ENCODE measurements at regions of chr15 and their contacts with region 1.

Region 1: GRCh38 chr15:74540761-74541493 is at the start of gene ARID3B:
- DNase-seq: peak; percentile 99
- H3K4me3 Mint-ChIP-seq: peak within 1 kb of the TSS; percentile 97
- H3K27ac Mint-ChIP-seq: peak within 1 kb of the TSS; percentile 90
- H3K4me1 Mint-ChIP-seq: peaks cover 46% of the 10 kb centered on the region
- H3K27me3 Mint-ChIP-seq: no peaks in the 10 kb centered on the region
- total RNA-seq, gene ARID3B: 14.2 to 15.9 TPM

Region 2: DNA sequence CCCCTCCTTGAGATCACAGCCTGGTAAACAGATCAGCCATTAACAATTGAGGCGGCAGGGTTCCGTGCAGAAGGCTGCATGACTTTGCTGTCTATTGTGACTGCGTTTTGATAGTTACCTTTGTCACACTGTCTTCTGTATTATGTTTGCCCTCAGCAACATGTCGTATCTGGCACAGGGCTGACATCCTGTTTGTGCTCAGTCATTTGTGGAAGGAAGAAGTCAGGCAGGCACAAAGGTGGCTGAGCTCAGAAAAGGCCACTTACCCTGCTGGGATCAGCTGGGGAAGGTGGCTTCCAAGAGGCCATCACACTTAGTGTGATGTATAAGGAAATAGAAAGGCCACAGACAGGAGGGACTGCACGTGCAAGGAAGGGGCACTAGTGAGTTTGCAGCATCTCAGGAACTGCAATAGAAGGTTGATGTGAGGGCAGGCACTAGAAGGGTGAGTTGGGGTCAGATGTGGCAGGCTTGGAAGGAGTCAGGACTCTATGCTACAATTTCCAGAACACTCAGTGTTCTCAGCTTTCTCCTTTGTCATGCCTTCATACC is 533.0 kb before region 1 on chr15:
- CTCF ChIA-PET with region 1: no interaction called
- intact Hi-C with region 1: loop called (anchors 5 kb)
- DNase-seq: peak; percentile 84
- H3K4me3 Mint-ChIP-seq: peak overlapping the region; percentile 51
- H3K27ac Mint-ChIP-seq: peak overlapping the region; percentile 96
- H3K4me1 Mint-ChIP-seq: peaks cover 69% of the 10 kb centered on the region
- H3K27me3 Mint-ChIP-seq: no peaks in the 10 kb centered on the region

Region 3: DNA sequence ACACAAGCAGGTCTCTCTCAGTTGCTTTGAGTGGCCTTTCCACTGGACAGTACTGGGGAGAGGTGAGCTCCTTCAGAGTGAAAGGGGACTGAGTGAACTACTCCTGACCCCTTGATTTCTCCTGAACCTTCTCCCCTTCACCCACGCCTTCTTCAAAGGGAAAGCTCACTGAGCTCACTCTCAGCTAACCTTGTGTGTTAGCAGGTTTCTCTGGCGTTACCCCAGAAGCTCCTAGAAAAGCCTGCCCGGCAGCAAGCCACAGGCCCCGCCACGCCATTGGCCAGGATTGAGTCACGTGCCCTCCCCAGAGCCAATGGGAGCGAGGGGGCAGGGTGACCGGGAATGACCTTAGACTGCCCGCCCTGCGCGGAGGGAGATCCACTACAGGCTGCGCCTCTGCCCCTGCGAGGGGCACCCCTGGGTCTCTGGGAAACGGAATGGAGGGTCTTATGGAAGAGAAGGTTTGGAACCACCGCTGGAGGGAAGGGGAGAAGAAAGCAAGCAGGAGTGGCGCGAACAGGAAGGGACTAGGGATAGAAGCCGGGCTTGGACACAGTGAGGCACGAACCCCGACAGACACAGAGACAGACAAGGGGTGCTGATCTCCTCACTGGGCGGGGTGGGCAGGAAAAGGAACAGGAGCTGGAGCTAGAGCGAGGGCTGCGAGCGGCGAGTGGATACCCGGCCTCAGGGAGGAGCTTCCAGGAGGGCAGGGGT is 57.4 kb after region 1 on chr15:
- CTCF ChIA-PET with region 1: no interaction called
- intact Hi-C with region 1: loop called (anchors 1 kb)
- DNase-seq: peak; percentile 95
- H3K4me3 Mint-ChIP-seq: peak overlapping the region; percentile 100
- H3K27ac Mint-ChIP-seq: peak overlapping the region; percentile 99
- H3K4me1 Mint-ChIP-seq: peaks cover 20% of the 10 kb centered on the region
- H3K27me3 Mint-ChIP-seq: no peaks in the 10 kb centered on the region

Region 4: GRCh38 chr15:74695597-74696397 is 154.9 kb after region 1 on chr15 and contains the start of gene EDC3:
- CTCF ChIA-PET with region 1: no interaction called
- intact Hi-C with region 1: loop called (anchors 5 kb)
- DNase-seq: peak; percentile 89
- H3K4me3 Mint-ChIP-seq: peak within 1 kb of the TSS; percentile 100
- H3K27ac Mint-ChIP-seq: peak within 1 kb of the TSS; percentile 98
- H3K4me1 Mint-ChIP-seq: peaks cover 40% of the 10 kb centered on the region
- H3K27me3 Mint-ChIP-seq: no peaks in the 10 kb centered on the region
- total RNA-seq, gene EDC3: 33.8 to 37.8 TPM

Region 5: DNA sequence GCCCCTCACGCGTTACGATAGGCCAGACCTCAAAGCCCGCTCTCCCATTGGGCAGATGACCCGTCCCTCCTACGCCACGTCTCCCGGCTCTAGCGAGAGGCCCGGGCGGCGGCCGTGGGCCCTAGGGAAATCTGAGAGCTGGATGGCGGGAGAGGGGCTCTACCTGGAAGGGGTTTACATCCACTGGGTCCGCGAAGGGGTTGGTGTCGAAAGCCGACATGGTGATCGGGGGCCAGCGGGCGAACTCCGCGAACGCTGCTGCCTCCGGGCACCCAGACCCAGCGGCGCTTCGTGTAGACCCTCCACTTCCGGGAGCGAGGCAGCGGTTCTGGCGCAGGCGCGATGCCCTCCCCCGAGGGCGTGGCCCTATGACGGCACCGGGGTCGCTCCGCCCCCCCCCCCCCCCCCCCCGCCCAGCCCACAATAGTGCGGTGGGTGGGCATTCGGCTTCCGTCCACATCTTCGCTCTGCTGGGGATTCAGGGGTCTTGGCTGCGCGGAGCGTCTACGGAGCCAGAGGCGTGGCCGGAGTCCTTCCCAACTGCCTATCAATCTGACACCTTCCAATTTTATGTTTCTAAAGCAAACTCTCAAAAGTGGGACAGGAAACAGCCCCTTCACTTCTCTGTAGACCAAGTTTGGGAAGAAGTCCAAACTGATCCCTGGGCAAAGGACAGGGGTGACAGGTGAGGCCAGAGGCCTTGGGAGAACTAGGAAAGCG is 332.3 kb after region 1 on chr15 and contains the start of gene SCAMP2:
- CTCF ChIA-PET with region 1: no interaction called
- intact Hi-C with region 1: loop called (anchors 2 kb)
- DNase-seq: peak; percentile 92
- H3K4me3 Mint-ChIP-seq: peak within 1 kb of the TSS; percentile 98
- H3K27ac Mint-ChIP-seq: peak within 1 kb of the TSS; percentile 92
- H3K4me1 Mint-ChIP-seq: peaks cover 42% of the 10 kb centered on the region
- H3K27me3 Mint-ChIP-seq: no peaks in the 10 kb centered on the region
- total RNA-seq, gene SCAMP2: 60.6 TPM

Region 6: GRCh38 chr15:74956648-74957300 is 415.8 kb after region 1 on chr15 and contains the start of gene RPP25:
- CTCF ChIA-PET with region 1: no interaction called
- intact Hi-C with region 1: loop called (anchors 5 kb)
- DNase-seq: peak; percentile 65
- H3K4me3 Mint-ChIP-seq: peak within 1 kb of the TSS; percentile 69
- H3K27ac Mint-ChIP-seq: no peak within 1 kb of the TSS
- H3K4me1 Mint-ChIP-seq: peaks cover 44% of the 10 kb centered on the region
- H3K27me3 Mint-ChIP-seq: peaks cover 28% of the 10 kb centered on the region
- total RNA-seq, gene RPP25: 3.5 to 3.7 TPM